Activated B cell treated with CpG ODN at 0.5 μM for 24 hours (primary cell): ENCODE measurements at regions of chr15 and their contacts with region 1.

Region 1: DNA sequence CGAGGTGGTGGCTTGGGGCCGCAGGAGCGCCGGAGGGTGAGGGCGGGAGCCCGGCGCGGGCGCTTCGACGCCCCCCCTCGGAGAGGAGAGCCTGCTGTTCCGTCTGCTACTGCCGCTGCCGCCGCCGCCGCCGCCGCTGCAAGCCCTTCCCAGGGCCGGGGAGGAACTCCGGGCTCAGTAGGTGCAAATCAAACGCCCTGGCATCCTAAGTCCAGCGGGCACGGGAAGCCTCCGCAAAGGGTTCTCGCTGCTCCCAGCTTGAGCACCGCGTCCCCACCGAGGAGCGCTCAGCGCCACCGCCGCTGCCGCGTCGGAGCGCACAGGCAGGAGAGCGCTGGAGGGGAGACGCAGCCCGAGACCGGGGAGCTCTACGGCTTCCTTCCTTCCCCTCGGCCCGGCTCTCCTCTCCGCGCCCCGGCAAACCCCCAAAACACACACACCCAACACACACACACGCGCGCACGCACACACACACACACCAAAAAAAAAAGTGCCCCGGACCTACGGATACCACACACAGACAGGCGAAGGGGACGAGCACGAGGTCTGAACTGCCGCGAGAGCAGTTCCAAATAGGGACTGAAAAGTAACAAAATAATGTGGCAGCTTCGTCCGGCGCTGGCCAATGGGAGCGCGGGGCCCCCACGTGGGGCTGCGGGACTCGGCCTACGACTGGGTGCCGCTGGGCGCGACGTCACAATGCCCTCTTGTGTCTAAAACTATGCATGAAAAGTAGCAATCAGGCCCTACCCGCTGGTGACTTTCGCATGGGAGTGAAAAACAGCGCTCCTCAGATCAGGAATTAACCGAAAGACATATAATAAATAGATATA is at the start of gene TLE3:
- DNase-seq: peak; percentile 96
- ATAC-seq: peak; percentile 56
- H3K4me3 Mint-ChIP-seq: peak within 1 kb of the TSS; percentile 98
- H3K27ac Mint-ChIP-seq: peak within 1 kb of the TSS; percentile 97
- H3K4me1 Mint-ChIP-seq: peaks cover 60% of the 10 kb centered on the region
- H3K27me3 Mint-ChIP-seq: peaks cover 2% of the 10 kb centered on the region
- CTCF ChIP-seq: no peak
- total RNA-seq, gene TLE3: 106 and 110 TPM in 2 replicates

Region 2: DNA sequence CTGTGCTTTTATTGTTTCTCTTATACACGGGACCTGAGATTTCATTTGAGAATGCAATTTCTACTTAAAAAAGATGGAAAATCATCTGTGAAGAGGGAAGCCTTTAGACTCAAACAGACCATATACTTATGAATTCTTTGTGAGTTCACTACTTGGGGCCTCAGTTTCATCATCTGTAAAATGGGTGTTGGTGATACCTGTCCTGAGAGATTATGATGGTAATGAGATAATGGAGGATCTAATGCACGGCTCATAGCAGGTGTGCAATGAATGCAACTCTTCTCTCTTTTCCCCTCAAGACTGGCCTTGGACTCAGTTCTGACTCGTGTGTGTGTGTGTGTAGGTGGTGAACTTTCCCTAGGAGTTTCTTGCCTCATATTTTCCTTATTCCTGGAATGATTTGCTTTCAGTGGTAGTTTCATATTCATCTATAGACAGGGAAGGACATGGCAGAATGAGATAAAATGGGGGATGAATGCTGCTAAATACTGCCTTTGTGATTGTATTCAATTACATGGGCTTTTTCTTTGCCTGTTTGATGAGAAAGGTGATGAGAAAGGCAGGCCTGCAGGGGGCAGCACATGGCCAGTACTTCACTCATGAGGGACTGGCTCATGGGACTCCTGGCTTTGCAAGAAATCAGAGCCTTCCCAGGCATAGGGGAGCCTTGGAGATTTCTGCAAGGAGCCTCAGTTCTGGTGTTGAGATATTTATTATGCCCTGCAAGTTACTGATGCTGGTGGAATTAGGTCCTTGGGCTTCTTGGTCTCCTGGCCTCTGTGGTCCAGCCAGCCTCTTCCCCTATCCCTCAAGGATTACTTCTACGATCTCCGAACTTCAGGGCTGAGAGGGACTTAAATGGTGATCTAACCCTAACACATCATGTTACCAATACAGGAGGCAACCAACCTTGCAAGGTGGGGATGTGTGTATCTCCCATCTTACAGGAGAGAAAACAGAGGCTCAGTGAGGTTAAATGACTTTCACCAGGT is 574.2 kb before region 1 on chr15:
- CTCF ChIA-PET with region 1: no interaction called
- POLR2A ChIA-PET with region 1: interaction called, 3 read pairs
- intact Hi-C with region 1: loop called (anchors 2 kb)
- DNase-seq: peak; percentile 32
- ATAC-seq: peak; percentile 42
- H3K4me3 Mint-ChIP-seq: no peak overlapping the region
- H3K27ac Mint-ChIP-seq: no peak overlapping the region
- H3K4me1 Mint-ChIP-seq: no peaks in the 10 kb centered on the region
- H3K27me3 Mint-ChIP-seq: peaks cover 12% of the 10 kb centered on the region
- CTCF ChIP-seq: no peak

Region 3: DNA sequence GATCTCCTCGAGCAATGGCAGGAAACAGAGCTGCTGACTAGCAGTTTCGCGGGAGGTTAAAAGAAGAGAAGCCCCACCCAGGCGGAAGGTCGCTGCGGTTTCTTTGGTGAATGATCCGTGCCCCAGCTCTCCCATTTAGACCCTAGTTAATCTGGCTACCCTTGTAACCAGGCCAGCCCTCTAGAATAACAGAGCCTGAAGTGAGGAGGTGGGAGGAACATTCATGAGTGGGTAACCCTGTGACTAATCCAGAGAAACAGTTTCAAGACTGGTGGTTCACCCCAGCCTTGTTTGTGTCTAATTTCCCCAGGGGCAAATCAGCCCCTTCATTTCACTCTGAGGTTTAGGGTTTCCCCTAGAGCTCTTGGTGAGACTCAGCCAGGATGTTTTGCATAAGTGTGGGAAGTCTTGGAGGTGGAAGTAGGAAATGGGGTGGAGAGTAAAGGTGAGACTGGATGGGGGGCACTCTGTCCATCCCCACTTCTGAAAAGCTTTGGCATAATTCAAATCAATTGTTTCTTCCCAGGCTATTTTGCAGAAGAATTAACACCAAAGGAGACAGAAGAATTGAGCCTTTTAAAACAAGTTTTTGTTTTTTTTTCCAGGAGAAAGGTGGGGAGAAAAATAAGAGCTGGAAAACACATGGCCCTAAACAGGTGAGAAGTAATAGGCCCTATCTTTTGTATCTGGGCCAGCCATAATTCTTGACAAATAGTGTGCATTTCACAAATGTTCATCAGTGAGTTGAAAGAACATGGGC is 341.8 kb before region 1 on chr15:
- CTCF ChIA-PET with region 1: interaction called, 5 read pairs
- POLR2A ChIA-PET with region 1: interaction called, 84 read pairs
- intact Hi-C with region 1: loop called (anchors 1 kb)
- DNase-seq: peak; percentile 63
- ATAC-seq: peak; percentile 84
- H3K4me3 Mint-ChIP-seq: peak overlapping the region; percentile 71
- H3K27ac Mint-ChIP-seq: peak overlapping the region; percentile 89
- H3K4me1 Mint-ChIP-seq: peaks cover 72% of the 10 kb centered on the region
- H3K27me3 Mint-ChIP-seq: no peaks in the 10 kb centered on the region
- CTCF ChIP-seq: no peak

Region 4: GRCh38 chr15:69825941-69826828 is 271.4 kb before region 1 on chr15:
- CTCF ChIA-PET with region 1: no interaction called
- POLR2A ChIA-PET with region 1: no interaction called
- intact Hi-C with region 1: no loop called
- DNase-seq: no peak
- ATAC-seq: no peak
- H3K4me3 Mint-ChIP-seq: no peak overlapping the region
- H3K27ac Mint-ChIP-seq: no peak overlapping the region
- H3K4me1 Mint-ChIP-seq: no peaks in the 10 kb centered on the region
- H3K27me3 Mint-ChIP-seq: peaks cover 11% of the 10 kb centered on the region
- CTCF ChIP-seq: no peak

Region 5: GRCh38 chr15:70036585-70037291 is 60.8 kb before region 1 on chr15:
- CTCF ChIA-PET with region 1: interaction called, 3 read pairs
- POLR2A ChIA-PET with region 1: interaction called, 21 read pairs
- intact Hi-C with region 1: loop called (anchors 1 kb)
- DNase-seq: no peak
- ATAC-seq: peak; percentile 55
- H3K4me3 Mint-ChIP-seq: peak overlapping the region; percentile 76
- H3K27ac Mint-ChIP-seq: peak overlapping the region; percentile 91
- H3K4me1 Mint-ChIP-seq: peaks cover 67% of the 10 kb centered on the region
- H3K27me3 Mint-ChIP-seq: no peaks in the 10 kb centered on the region
- CTCF ChIP-seq: no peak

Region 6: GRCh38 chr15:70165716-70166284 is 68.2 kb after region 1 on chr15:
- CTCF ChIA-PET with region 1: no interaction called
- POLR2A ChIA-PET with region 1: no interaction called
- intact Hi-C with region 1: no loop called
- DNase-seq: no peak
- ATAC-seq: no peak
- H3K4me3 Mint-ChIP-seq: no peak overlapping the region
- H3K27ac Mint-ChIP-seq: no peak overlapping the region
- H3K4me1 Mint-ChIP-seq: peaks cover under 1% of the 10 kb centered on the region
- H3K27me3 Mint-ChIP-seq: peaks cover 3% of the 10 kb centered on the region
- CTCF ChIP-seq: no peak

Region 7: DNA sequence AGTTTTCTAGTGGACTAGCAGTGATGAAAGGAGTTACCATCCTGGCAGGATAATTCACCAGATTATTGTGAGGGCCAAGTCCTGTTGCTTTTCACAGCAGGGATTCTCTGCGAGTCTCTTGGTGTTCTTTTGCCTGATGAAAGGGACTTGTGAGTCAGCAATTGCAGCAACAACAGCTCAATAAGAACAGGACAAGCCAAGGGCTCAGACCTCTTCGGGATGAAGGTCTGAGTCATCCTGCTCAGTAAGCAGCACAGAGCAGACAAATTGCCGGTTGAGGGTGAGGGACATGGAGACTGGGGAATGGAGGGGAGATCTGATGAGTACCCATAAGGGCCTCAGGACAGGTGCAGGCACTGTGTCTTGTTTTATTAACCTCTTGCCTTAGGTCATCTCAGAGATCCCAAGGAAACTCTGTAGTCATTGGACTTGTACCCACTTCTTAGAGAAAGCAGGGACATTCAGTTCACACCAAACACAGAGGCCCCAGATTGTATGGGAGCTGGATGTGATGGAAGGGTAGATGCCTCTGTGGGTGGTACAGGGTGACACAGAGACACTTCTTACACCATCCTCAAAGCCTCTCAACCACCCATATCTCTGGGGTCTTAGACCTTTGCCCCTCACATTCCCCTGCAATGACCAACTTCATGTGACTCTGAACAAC is 174.0 kb after region 1 on chr15:
- CTCF ChIA-PET with region 1: interaction called, 3 read pairs
- POLR2A ChIA-PET with region 1: interaction called, 30 read pairs
- intact Hi-C with region 1: no loop called
- DNase-seq: no peak
- ATAC-seq: no peak
- H3K4me3 Mint-ChIP-seq: no peak overlapping the region
- H3K27ac Mint-ChIP-seq: no peak overlapping the region
- H3K4me1 Mint-ChIP-seq: peaks cover 57% of the 10 kb centered on the region
- H3K27me3 Mint-ChIP-seq: peaks cover 3% of the 10 kb centered on the region
- CTCF ChIP-seq: no peak

Region 8: GRCh38 chr15:70466895-70467529 is 369.5 kb after region 1 on chr15:
- CTCF ChIA-PET with region 1: interaction called, 7 read pairs
- POLR2A ChIA-PET with region 1: interaction called, 21 read pairs
- intact Hi-C with region 1: no loop called
- DNase-seq: no peak
- ATAC-seq: peak; percentile 73
- H3K4me3 Mint-ChIP-seq: no peak overlapping the region
- H3K27ac Mint-ChIP-seq: no peak overlapping the region
- H3K4me1 Mint-ChIP-seq: peaks cover 20% of the 10 kb centered on the region
- H3K27me3 Mint-ChIP-seq: peaks cover 3% of the 10 kb centered on the region
- CTCF ChIP-seq: peak; percentile 72